CD8-positive, alpha-beta T cell (primary cell): ENCODE measurements at regions of chr12 and their contacts with region 1.

Region 1: GRCh38 chr12:44525815-44526654 is 350.1 kb downstream of the NELL2 start:
- DNase-seq: no peak
- ATAC-seq: no peak
- H3K4me3 ChIP-seq: no peak overlapping the region
- H3K4me3 Mint-ChIP-seq: no peak overlapping the region
- H3K27ac ChIP-seq: no peak overlapping the region
- H3K27ac Mint-ChIP-seq: peak overlapping the region; percentile 3
- H3K4me1 ChIP-seq: no peaks in the 10 kb centered on the region
- H3K4me1 Mint-ChIP-seq: no peaks in the 10 kb centered on the region
- H3K27me3 ChIP-seq: no peaks in the 10 kb centered on the region
- H3K27me3 Mint-ChIP-seq: no peaks in the 10 kb centered on the region
- CTCF ChIP-seq: no peak

Region 2: GRCh38 chr12:44544018-44544417 is 18.0 kb after region 1 on chr12:
- CTCF ChIA-PET with region 1: no interaction called
- POLR2A ChIA-PET with region 1: no interaction called
- intact Hi-C with region 1: loop called in 1 of 2 experiments (anchors 2 kb)
- DNase-seq: no peak
- ATAC-seq: no peak
- H3K4me3 ChIP-seq: no peak overlapping the region
- H3K4me3 Mint-ChIP-seq: no peak overlapping the region
- H3K27ac ChIP-seq: no peak overlapping the region
- H3K27ac Mint-ChIP-seq: peak overlapping the region; percentile 35
- H3K4me1 ChIP-seq: peaks cover 37% of the 10 kb centered on the region
- H3K4me1 Mint-ChIP-seq: peaks cover 60% of the 10 kb centered on the region
- H3K27me3 ChIP-seq: no peaks in the 10 kb centered on the region
- H3K27me3 Mint-ChIP-seq: no peaks in the 10 kb centered on the region
- CTCF ChIP-seq: no peak